ENCODE measurements at regions of chr5 and their contacts with region 1.

Region 1: GRCh38 chr5:128844354-128844923 is 120.8 kb upstream of the SLC27A6 start:
- DNase-seq: no peak
- H3K4me3 ChIP-seq: no peak overlapping the region
- H3K27ac ChIP-seq: no peak overlapping the region
- H3K4me1 ChIP-seq: no peaks in the 10 kb centered on the region
- H3K27me3 ChIP-seq: peaks cover 2% of the 10 kb centered on the region
- CTCF ChIP-seq: peak; percentile 30 to 35

Region 2: DNA sequence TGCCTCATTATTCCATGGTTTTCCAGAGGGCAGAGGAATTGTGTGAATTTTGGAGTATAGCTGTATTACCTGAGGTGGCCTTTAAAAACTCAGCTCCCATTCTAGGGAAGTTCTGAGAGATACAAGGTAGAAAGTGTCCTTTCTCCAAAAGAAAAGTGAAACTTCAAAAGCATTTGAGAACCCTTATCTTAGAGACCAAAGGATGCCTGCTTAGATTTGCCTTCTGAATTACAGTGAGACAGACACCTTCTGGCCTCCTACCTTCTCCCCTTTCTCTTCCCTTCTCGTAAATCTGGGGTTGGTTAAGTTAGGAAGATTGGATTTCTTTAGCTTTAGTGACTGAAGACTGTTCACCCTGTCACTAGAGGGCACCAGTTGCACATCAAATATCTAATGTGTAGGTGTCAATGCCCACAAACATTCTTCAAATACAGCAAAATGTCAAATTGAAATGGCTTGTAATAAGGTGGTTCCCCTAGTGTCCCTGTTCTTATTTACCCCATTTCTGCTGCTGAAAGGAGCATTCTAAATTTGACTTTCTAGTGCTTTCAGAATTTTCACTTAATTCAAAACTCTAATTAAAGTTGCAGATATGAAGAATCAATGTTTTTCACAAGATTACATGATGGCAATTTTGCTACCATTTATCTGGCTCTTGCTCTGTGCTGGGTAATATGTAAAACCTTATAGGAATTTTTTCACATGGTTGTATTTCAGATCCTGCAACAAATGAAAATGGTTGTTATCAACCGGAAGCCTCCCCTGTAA is 1280.3 kb before region 1 on chr5:
- CTCF ChIA-PET with region 1: no interaction called
- dilution Hi-C with region 1: no loop called
- in situ Hi-C with region 1: no loop called
- intact Hi-C with region 1: loop called (anchors 10 kb)
- DNase-seq: peak; percentile 44
- H3K4me3 ChIP-seq: no peak overlapping the region
- H3K27ac ChIP-seq: no peak overlapping the region
- H3K4me1 ChIP-seq: no peaks in the 10 kb centered on the region
- H3K27me3 ChIP-seq: no peaks in the 10 kb centered on the region
- CTCF ChIP-seq: peak; percentile 62 to 73

Region 3: DNA sequence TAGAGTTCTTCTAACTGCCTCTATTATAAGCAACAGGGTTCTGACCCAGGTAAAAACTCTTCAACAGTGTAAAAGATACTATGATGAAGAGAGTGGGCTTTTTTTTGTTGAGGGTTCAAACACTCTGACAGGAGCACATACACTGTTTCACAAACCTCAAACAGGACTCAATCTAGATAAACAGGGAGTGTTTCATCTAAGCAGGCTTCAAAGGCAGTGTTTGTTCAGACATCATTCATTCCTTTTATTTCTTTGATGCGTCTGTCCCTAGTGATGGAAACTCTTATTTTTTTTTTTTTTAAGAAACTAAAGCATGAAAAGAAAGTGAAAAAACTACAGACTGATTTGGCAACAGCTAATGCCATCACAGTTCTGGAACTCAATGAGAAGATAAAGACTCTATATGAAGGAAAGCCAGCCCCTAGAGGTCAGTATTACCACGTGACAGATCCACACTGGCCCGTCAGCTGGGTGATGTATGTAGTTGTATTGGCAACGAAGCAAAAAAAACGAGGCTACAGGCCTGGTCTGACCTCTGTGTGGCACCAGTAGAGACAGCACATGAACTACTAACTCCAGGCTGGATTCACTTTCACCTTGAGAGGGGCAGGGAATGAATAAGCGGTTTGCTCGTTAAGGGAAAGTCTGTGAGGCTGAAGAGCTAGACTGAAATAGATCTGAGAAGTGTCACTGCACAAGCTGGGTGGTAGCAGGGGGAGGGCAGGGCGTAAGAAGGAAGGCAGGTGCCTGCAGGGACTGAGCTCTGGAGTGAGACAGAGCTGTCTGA is 969.0 kb before region 1 on chr5:
- CTCF ChIA-PET with region 1: interaction called, 3 read pairs
- dilution Hi-C with region 1: no loop called
- in situ Hi-C with region 1: no loop called
- intact Hi-C with region 1: loop called (anchors 10 kb)
- DNase-seq: peak; percentile 51
- H3K4me3 ChIP-seq: no peak overlapping the region
- H3K27ac ChIP-seq: no peak overlapping the region
- H3K4me1 ChIP-seq: peaks cover 18% of the 10 kb centered on the region
- H3K27me3 ChIP-seq: no peaks in the 10 kb centered on the region
- CTCF ChIP-seq: peak; percentile 10 to 18

Region 4: DNA sequence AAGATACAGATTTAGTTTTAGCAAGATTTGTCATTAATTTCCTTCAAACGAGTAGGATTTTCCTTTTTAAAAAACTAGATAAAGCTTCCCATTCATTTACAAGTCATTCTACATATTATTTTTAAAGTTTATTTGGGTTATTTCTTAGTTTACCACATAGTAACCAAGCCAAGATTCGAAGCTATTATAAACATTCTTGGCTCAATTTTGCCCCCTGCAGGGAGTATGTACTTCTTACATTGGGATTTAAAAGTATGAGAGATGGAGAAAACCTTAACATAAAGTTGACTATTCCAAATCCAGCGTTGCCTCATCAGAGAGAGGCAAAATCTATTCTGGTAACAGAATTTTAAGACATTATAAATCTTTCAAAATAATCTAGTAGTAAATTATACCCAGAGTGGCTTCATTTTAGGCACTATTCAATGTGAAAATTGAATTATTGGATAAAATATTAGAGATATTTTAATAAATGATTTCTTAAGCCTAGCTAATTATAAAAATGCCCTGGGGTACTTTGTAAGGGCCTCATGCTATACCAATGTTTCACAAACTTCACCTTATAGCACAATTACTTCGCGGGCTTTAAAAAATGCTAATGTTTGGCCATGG is 345.5 kb before region 1 on chr5:
- CTCF ChIA-PET with region 1: no interaction called
- dilution Hi-C with region 1: no loop called
- in situ Hi-C with region 1: no loop called
- intact Hi-C with region 1: loop called (anchors 5 kb)
- DNase-seq: peak; percentile 20
- H3K4me3 ChIP-seq: no peak overlapping the region
- H3K27ac ChIP-seq: no peak overlapping the region
- H3K4me1 ChIP-seq: no peaks in the 10 kb centered on the region
- H3K27me3 ChIP-seq: no peaks in the 10 kb centered on the region
- CTCF ChIP-seq: peak; percentile 50 to 61

Region 5: GRCh38 chr5:128667152-128667551 is 177.3 kb before region 1 on chr5:
- CTCF ChIA-PET with region 1: no interaction called
- dilution Hi-C with region 1: no loop called
- in situ Hi-C with region 1: no loop called
- intact Hi-C with region 1: loop called (anchors 5 kb)
- DNase-seq: no peak
- H3K4me3 ChIP-seq: no peak overlapping the region
- H3K27ac ChIP-seq: no peak overlapping the region
- H3K4me1 ChIP-seq: no peaks in the 10 kb centered on the region
- H3K27me3 ChIP-seq: no peaks in the 10 kb centered on the region
- CTCF ChIP-seq: peak in 1 of 2 donors; percentile 22

Measured in mammary epithelial cell (primary cell).